Right ventricle myocardium superior (tissue), 1 donor: ENCODE measurements at regions of chrX and their contacts with region 1.

Region 1: GRCh38 chrX:103254921-103255493 is at the start of gene TCEAL8:
- DNase-seq: peak; percentile 89
- ATAC-seq: peak; percentile 99
- total RNA-seq, gene TCEAL8: 34.2 TPM

Region 2: DNA sequence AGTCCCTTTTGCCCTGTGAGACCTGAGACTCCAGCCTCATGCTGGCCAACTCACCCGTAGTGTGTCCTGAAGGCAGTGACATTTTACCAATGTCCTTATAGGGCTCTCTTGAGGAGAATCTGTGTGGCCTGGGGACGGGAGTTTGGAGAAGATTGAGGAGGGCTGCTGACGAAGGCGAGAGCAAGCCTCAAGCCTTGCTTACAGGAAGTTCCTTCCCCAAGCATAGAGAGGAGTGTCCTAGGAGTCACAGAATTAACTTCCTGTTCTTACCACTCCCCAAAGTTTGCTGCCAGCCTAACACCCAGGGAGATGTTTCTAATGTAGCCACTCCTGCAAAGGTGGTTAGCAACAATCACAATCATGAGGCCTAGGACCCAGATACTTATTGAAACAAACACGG is 162.1 kb before region 1 on chrX and contains the start of gene NXF3:
- intact Hi-C with region 1: no loop called
- DNase-seq: no peak
- ATAC-seq: no peak
- total RNA-seq, gene NXF3: 0.32 TPM

Region 3: DNA sequence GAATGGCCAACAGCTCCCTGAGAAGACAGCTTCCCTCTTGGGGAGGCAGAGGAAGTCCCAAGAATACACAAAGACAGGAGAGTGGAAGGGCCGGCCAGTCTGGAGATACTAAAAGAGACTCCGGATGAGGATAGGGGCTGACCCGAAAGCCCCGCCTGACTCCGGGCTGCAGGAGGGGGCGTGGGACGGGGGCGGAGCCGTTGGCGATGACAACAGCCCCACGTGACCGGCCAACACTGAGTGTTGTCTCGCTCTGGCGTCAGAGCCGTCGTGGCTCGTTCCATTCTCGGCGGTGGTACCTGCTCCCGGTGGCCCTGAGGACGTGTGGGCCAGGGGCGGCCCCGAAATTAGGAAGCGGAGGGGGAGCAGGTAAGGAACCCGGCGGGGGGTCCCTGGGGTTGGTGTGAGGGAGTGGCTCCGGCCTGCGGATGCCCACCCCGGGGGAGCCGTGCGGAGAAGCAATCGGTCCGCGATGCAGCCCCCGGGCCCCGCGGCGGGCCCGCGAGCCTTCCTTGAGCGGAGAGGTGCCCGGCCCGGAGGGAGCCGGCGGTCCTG is 40.1 kb before region 1 on chrX and contains the start of gene BEX4:
- intact Hi-C with region 1: loop called (anchors 5 kb)
- DNase-seq: peak; percentile 90
- ATAC-seq: peak; percentile 99
- total RNA-seq, gene BEX4: 30.5 TPM